ENCODE measurements at regions of chr1 and their contacts with region 1.

Region 1: GRCh38 chr1:94854458-94855306 is 34.5 kb downstream of the SLC44A3 start:
- DNase-seq: peak; percentile 96
- H3K4me3 ChIP-seq: peak overlapping the region; percentile 24 to 49 (median 26)
- H3K27ac ChIP-seq: peak overlapping the region; percentile 56
- H3K4me1 ChIP-seq: peaks cover 21% of the 10 kb centered on the region
- H3K27me3 ChIP-seq: no peaks in the 10 kb centered on the region
- CTCF ChIP-seq: peak; percentile 91 to 96

Region 2: DNA sequence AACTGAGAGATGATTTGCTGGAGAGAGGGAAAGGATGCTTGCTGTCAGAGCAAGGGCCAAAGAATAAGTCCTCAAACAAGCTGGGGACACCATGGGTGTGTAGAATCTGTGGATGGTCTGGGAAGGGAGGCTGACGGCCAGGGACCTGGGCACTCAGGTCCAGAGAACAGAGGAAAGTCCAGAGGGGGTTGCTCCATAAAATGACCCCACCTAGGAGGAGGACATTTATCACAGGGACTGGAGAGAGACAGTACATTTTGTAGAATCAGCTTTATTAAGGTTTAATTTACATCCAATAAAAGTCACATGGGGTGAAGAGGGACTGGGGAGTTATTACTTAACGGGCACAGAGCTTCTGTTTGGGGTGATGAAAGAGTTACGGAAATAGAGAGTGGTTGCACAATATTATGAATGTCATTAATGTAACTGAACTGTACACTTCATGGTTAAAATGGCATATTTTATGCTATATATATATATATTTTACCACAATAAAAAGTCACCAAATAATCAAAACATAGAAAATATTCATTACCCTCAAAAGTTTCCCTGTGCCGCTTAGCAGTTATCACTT is 509.4 kb before region 1 on chr1:
- CTCF ChIA-PET with region 1: no interaction called
- dilution Hi-C with region 1: no loop called
- in situ Hi-C with region 1: no loop called
- intact Hi-C with region 1: no loop called
- DNase-seq: no peak
- H3K4me3 ChIP-seq: no peak overlapping the region
- H3K27ac ChIP-seq: no peak overlapping the region
- H3K4me1 ChIP-seq: no peaks in the 10 kb centered on the region
- H3K27me3 ChIP-seq: no peaks in the 10 kb centered on the region
- CTCF ChIP-seq: no peak

Region 3: GRCh38 chr1:94522304-94522703 is 332.4 kb before region 1 on chr1:
- CTCF ChIA-PET with region 1: no interaction called
- dilution Hi-C with region 1: no loop called
- in situ Hi-C with region 1: no loop called
- intact Hi-C with region 1: no loop called
- DNase-seq: peak; percentile 48
- H3K4me3 ChIP-seq: no peak overlapping the region
- H3K27ac ChIP-seq: no peak overlapping the region
- H3K4me1 ChIP-seq: no peaks in the 10 kb centered on the region
- H3K27me3 ChIP-seq: no peaks in the 10 kb centered on the region
- CTCF ChIP-seq: peak; percentile 43 to 57

Region 4: GRCh38 chr1:94865360-94865759 is 10.7 kb after region 1 on chr1:
- CTCF ChIA-PET with region 1: interaction called, 10 read pairs
- dilution Hi-C with region 1: no loop called
- in situ Hi-C with region 1: no loop called
- intact Hi-C with region 1: no loop called
- DNase-seq: no peak
- H3K4me3 ChIP-seq: no peak overlapping the region
- H3K27ac ChIP-seq: no peak overlapping the region
- H3K4me1 ChIP-seq: peaks cover 37% of the 10 kb centered on the region
- H3K27me3 ChIP-seq: no peaks in the 10 kb centered on the region
- CTCF ChIP-seq: no peak

Region 5: DNA sequence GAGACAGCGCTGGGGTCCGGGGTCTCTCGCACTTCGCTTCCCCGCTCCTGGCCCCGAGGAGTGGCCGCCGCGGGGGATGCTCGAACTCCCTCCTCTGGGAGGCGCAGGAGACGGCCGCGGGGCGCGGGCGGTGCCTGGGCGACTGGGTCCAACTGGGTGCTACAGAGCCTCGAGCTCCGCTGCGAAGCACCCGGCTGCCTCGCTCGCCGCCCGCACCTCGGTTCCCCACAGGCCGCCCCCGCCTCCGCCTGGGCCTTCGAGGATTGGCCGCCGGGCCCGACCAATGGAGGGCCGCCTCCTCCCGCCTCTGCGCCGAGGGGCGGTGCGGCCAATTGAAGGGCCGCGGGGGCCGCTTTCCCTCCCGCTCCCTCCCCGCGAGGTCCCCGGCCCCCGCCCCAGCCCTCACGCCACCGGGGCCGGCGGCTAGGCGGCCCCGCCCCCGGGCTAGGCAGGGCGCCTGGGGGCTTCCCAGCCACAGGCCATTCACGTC is 72.3 kb after region 1 on chr1 and contains the start of gene CNN3:
- CTCF ChIA-PET with region 1: no interaction called
- dilution Hi-C with region 1: no loop called
- in situ Hi-C with region 1: loop called in 1 of 2 experiments (anchors 10 kb)
- intact Hi-C with region 1: loop called (anchors 1 kb)
- DNase-seq: peak; percentile 92
- H3K4me3 ChIP-seq: peak within 1 kb of the TSS; percentile 75 to 83 (median 79)
- H3K27ac ChIP-seq: peak within 1 kb of the TSS; percentile 79
- H3K4me1 ChIP-seq: peaks cover 24% of the 10 kb centered on the region
- H3K27me3 ChIP-seq: no peaks in the 10 kb centered on the region
- CTCF ChIP-seq: no peak
- total RNA-seq, gene CNN3: 136 to 244 TPM

Region 6: GRCh38 chr1:95015076-95015475 is 160.4 kb after region 1 on chr1:
- CTCF ChIA-PET with region 1: interaction called, 15 read pairs
- dilution Hi-C with region 1: no loop called
- in situ Hi-C with region 1: no loop called
- intact Hi-C with region 1: no loop called
- DNase-seq: no peak
- H3K4me3 ChIP-seq: no peak overlapping the region
- H3K27ac ChIP-seq: no peak overlapping the region
- H3K4me1 ChIP-seq: peaks cover 7% of the 10 kb centered on the region
- H3K27me3 ChIP-seq: no peaks in the 10 kb centered on the region
- CTCF ChIP-seq: no peak